ENCODE measurements at regions of chr11 and their contacts with region 1.

Region 1: DNA sequence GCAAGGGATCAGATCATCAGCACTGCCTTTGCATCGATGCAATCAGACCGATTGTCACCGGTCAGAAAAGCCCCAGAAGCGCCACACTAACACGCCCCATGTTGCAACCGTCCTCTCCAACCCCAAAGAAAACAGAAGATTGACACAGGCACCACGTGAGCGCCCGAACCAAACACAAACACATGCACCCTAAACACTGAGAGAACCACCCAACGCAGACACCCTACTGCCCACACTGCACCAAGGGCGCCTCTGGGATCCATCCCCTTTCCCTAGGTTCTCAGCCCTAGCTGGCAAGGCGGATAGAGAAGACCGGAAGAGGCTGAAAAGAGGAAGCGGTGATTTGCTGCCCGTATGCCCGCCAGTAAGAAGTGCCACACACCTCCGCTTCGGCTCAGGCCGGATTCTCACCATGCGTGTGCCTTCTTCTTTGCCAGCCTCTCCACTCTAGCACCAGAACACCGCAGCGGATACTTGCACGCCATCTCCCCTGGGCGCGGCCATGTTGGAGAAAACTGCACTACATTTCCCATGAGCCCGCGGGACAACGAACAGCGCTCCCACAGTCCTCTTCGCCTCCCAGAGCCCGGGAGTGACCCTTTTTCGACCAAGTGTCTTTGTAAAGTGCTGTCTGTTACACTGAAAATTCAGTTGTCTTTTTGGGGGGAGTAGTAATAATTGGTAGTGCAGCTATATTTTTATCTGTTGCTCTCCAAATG is at the start of gene ALKBH8:
- DNase-seq: peak; percentile 59 to 68
- ATAC-seq: peak; percentile 95 to 98
- H3K4me3 ChIP-seq: peak within 1 kb of the TSS; percentile 73 to 92 (median 80)
- H3K27ac ChIP-seq: peak within 1 kb of the TSS; percentile 86 to 89 (median 88)
- H3K4me1 ChIP-seq: peaks cover 13 to 22% of the 10 kb centered on the region in 2 donors
- H3K27me3 ChIP-seq: no peaks in the 10 kb centered on the region
- CTCF ChIP-seq: no peak
- POLR2A ChIP-seq: no peak
- total RNA-seq, gene ALKBH8: 5.4 to 8.1 (median 6.6) TPM

Region 2: GRCh38 chr11:107482234-107482633 is 83.1 kb before region 1 on chr11:
- in situ Hi-C with region 1: no loop called
- intact Hi-C with region 1: no loop called
- DNase-seq: no peak
- ATAC-seq: no peak
- H3K4me3 ChIP-seq: no peak overlapping the region
- H3K27ac ChIP-seq: no peak overlapping the region
- H3K4me1 ChIP-seq: no peaks in the 10 kb centered on the region
- H3K27me3 ChIP-seq: peaks cover 0 to 3% (median 0%) of the 10 kb centered on the region in 3 donors
- CTCF ChIP-seq: no peak
- POLR2A ChIP-seq: no peak

Region 3: DNA sequence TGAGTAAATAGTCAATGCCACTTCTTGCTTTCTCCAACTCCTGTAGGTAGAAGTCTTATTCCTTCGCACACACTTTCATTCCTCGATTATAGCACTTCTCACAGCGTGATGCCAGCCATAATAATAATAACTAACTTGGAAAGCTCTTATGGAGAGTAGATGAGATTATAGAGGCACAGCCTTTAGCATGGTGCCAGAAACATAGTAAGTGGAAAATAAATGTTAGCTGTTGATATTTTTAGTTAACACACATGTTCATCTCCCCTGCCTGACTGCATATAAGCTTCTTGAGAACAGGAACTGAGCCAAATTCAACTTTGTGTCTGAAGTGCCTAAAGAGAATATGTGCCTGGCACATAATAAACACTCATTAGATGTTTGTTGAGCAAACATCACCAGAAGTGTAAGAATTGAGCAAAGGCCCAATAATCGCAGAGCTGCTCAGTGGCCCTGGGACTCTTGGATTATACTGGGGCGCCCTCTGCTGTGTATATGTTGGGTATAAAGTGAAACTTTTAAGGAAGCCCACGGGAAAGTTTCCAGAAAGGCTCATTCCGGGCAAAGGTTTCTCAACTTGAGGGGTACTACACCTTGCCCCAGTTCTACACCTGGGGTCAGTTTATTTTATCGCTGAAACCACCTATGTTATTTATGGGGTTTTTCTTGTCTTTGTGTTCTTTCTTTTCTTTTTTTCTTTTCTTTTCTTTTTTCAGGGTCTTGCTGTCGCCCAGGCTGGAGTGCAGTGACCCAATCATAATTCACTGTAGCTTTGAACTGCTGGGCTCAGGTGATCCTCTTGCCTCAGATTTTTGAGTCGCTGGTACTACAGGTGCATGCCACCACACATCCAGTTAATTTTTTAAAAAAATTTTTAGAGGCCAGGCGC is 124.2 kb after region 1 on chr11:
- in situ Hi-C with region 1: loop called in 1 of 4 experiments (anchors 10 kb)
- intact Hi-C with region 1: loop called (anchors 1 kb)
- DNase-seq: peak; percentile 53 to 56
- ATAC-seq: peak; percentile 79 to 89
- H3K4me3 ChIP-seq: peak overlapping the region in 3 of 4 donors; percentile 9 to 19 (median 13)
- H3K27ac ChIP-seq: peak overlapping the region; percentile 13 to 33 (median 28)
- H3K4me1 ChIP-seq: peaks cover 0 to 3% of the 10 kb centered on the region in 2 donors
- H3K27me3 ChIP-seq: no peaks in the 10 kb centered on the region
- CTCF ChIP-seq: peak; percentile 49 to 74 (median 67)
- POLR2A ChIP-seq: no peak

Region 4: DNA sequence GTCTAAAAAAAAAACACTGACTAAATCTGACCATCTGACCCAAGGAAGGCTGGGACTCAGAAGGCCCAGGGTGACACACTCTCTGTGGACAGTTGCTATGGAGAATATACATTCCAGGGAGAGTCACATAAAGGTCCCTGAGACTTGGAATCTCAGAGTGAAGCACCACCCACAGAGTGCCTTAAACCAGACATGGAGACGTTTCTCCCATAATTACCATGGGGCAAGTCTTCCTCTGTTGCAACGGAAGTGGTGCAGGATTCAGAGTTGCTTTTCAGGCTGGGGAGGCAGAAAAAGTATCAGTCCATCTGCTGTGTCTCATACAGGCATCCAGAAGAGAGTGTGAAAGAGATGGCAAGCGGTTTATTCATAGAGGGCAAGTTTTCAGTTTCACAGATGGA is 205.2 kb after region 1 on chr11:
- in situ Hi-C with region 1: loop called in 1 of 4 experiments (anchors 10 kb)
- intact Hi-C with region 1: loop called (anchors 5 kb)
- DNase-seq: no peak
- ATAC-seq: peak; percentile 51 to 66
- H3K4me3 ChIP-seq: no peak overlapping the region
- H3K27ac ChIP-seq: peak overlapping the region; percentile 68 to 78 (median 72)
- H3K4me1 ChIP-seq: peaks cover 21 to 29% of the 10 kb centered on the region in 2 donors
- H3K27me3 ChIP-seq: no peaks in the 10 kb centered on the region
- CTCF ChIP-seq: no peak
- POLR2A ChIP-seq: no peak

Region 5: GRCh38 chr11:107898270-107898669 is 332.9 kb after region 1 on chr11:
- in situ Hi-C with region 1: no loop called
- intact Hi-C with region 1: loop called (anchors 10 kb)
- DNase-seq: no peak
- ATAC-seq: no peak
- H3K4me3 ChIP-seq: no peak overlapping the region
- H3K27ac ChIP-seq: no peak overlapping the region
- H3K4me1 ChIP-seq: no peaks in the 10 kb centered on the region
- H3K27me3 ChIP-seq: no peaks in the 10 kb centered on the region
- CTCF ChIP-seq: peak in 4 of 5 experiments; percentile 24 to 39 (median 28)
- POLR2A ChIP-seq: no peak

Region 6: GRCh38 chr11:108121274-108122155 is 556.1 kb after region 1 on chr11 and contains the start of gene ACAT1:
- in situ Hi-C with region 1: no loop called
- intact Hi-C with region 1: loop called (anchors 10 kb)
- DNase-seq: peak; percentile 96 to 99
- ATAC-seq: peak; percentile 72 to 82
- H3K4me3 ChIP-seq: peak within 1 kb of the TSS; percentile 63 to 84 (median 76)
- H3K27ac ChIP-seq: peak within 1 kb of the TSS; percentile 89 to 99 (median 93)
- H3K4me1 ChIP-seq: peaks cover 34 to 42% of the 10 kb centered on the region in 2 donors
- H3K27me3 ChIP-seq: no peaks in the 10 kb centered on the region
- CTCF ChIP-seq: peak; percentile 39 to 84 (median 60)
- POLR2A ChIP-seq: peak; percentile 98
- total RNA-seq, gene ACAT1: 288 to 950 (median 605) TPM

Measured in gastrocnemius medialis (tissue), 4 donors.